Heart right ventricle (tissue), 16 donors: ENCODE measurements at regions of chr11 and their contacts with region 1.

Region 1: GRCh38 chr11:69888483-69889076 is 69.4 kb upstream of the FGF3 start:
- DNase-seq: peak; percentile 58 to 66
- ATAC-seq: peak in 7 of 8 donors; percentile 17 to 58 (median 49)
- H3K4me3 ChIP-seq: no peak overlapping the region
- H3K27ac ChIP-seq: no peak overlapping the region
- H3K4me1 ChIP-seq: peaks cover 0 to 14% (median 0%) of the 10 kb centered on the region in 9 donors
- H3K27me3 ChIP-seq: peaks cover 0 to 53% (median 39%) of the 10 kb centered on the region in 7 donors
- CTCF ChIP-seq: peak; percentile 67 to 91 (median 88)

Region 2: DNA sequence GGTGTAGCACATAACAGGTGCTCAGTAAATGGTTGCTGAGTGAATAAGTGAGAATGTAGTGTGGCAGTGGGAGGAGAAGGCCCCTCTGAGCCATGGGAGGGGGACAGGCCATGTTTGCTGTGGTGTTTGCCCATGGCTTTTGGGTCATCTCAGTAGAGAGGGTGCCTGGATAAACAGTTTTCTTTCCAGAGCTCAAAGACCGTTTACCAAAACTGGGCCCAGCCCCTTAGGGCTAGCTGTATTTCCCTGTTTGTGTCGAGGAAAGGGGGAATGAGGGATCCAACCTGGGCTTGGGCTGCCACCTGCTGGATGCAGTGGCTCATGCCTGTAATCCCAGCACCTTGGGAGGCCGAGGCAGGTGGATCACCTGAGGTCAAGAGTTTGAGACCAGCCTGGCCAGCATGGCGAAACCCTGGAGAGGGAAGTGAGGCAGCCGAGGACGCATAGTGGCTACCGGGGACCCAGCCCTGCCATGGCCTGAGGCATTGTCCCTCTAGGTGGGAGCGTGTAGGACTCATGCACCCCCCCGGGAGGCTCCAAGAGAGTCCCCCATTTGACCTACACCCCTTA is 204.7 kb before region 1 on chr11:
- intact Hi-C with region 1: loop called in 9 of 10 experiments (anchors 1 to 5 kb)
- DNase-seq: no peak
- ATAC-seq: no peak
- H3K4me3 ChIP-seq: no peak overlapping the region
- H3K27ac ChIP-seq: no peak overlapping the region
- H3K4me1 ChIP-seq: peaks cover 0 to 8% (median 6%) of the 10 kb centered on the region in 9 donors
- H3K27me3 ChIP-seq: peaks cover 0 to 29% (median 14%) of the 10 kb centered on the region in 7 donors
- CTCF ChIP-seq: peak in 7 of 9 donors; percentile 24 to 32 (median 29)

Region 3: GRCh38 chr11:69699213-69699612 is 189.4 kb before region 1 on chr11:
- intact Hi-C with region 1: loop called in 4 of 10 experiments (anchors 5 kb)
- DNase-seq: peak in 1 of 2 donors; percentile 32
- ATAC-seq: peak in 5 of 8 donors; percentile 13 to 52 (median 25)
- H3K4me3 ChIP-seq: no peak overlapping the region
- H3K27ac ChIP-seq: no peak overlapping the region
- H3K4me1 ChIP-seq: peaks cover 5 to 37% (median 20%) of the 10 kb centered on the region in 9 donors
- H3K27me3 ChIP-seq: peaks cover 15 to 88% (median 77%) of the 10 kb centered on the region in 7 donors
- CTCF ChIP-seq: no peak

Region 4: GRCh38 chr11:69704508-69705253 is 183.9 kb before region 1 on chr11:
- intact Hi-C with region 1: loop called in 5 of 10 experiments (anchors 5 kb)
- DNase-seq: no peak
- ATAC-seq: peak in 5 of 8 donors; percentile 35 to 61 (median 50)
- H3K4me3 ChIP-seq: peak overlapping the region in 9 of 10 donors; percentile 0 to 38 (median 17)
- H3K27ac ChIP-seq: no peak overlapping the region
- H3K4me1 ChIP-seq: peaks cover 5 to 40% (median 26%) of the 10 kb centered on the region in 9 donors
- H3K27me3 ChIP-seq: peaks cover 24 to 92% (median 83%) of the 10 kb centered on the region in 7 donors
- CTCF ChIP-seq: peak in 8 of 9 donors; percentile 7 to 64 (median 48)